ENCODE measurements at regions of chr1 and their contacts with region 1.

Region 1: GRCh38 chr1:150235852-150236613 is at the start of gene ANP32E:
- DNase-seq: peak; percentile 82
- ATAC-seq: peak; percentile 88
- H3K4me3 Mint-ChIP-seq: no peak within 1 kb of the TSS
- H3K27ac Mint-ChIP-seq: no peak within 1 kb of the TSS
- H3K4me1 Mint-ChIP-seq: peaks cover 22% of the 10 kb centered on the region
- H3K27me3 Mint-ChIP-seq: peaks cover 2% of the 10 kb centered on the region
- CTCF ChIP-seq: no peak
- total RNA-seq, gene ANP32E: 70.5 and 84.3 TPM in 2 replicates

Region 2: DNA sequence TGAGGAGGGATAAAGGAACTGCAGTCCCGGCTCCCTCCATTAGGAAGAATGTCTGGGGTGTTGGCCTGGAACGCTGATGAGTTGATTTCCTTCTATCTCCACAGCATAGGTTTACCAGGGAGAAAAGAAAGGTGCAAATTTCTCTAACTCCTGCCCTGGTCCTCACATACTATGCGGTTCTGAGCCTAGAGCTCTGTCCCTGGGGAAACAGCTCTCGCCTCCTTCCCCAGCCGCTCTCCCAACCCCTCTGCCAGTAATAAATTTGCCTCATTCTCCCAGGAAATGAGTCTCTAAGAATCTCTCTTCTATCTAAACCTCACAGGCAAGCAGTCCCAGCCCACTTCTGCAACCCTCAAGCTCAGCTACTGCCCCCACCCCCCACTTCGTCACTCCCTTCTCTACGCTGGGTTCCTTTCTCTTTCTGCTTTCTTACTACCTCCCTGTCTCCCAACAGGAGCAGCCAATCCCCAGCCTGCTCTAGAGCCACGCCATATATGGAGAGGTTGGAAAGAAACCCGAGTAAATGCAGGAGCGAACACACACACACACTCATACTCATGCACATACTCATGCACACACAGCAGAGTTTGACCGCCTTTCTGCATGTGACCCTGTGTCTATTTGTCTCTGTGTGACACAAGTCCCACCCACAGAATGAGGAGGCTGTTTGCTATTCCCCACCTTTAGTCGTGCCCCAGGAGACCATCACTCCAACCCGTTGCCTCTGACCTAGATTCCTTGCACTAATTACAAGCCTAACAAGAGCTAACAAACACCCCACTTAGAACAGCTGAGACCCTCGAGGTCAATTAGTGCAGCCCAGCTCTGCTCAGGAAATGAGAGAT is 72.9 kb before region 1 on chr1:
- CTCF ChIA-PET with region 1: no interaction called
- POLR2A ChIA-PET with region 1: interaction called, 9 read pairs
- intact Hi-C with region 1: loop called (anchors 2 kb)
- DNase-seq: peak; percentile 34
- ATAC-seq: peak; percentile 28
- H3K4me3 Mint-ChIP-seq: peak overlapping the region; percentile 81
- H3K27ac Mint-ChIP-seq: peak overlapping the region; percentile 98
- H3K4me1 Mint-ChIP-seq: peaks cover 86% of the 10 kb centered on the region
- H3K27me3 Mint-ChIP-seq: no peaks in the 10 kb centered on the region
- CTCF ChIP-seq: no peak

Region 3: GRCh38 chr1:150225546-150225945 is 10.5 kb before region 1 on chr1:
- CTCF ChIA-PET with region 1: interaction called, 3 read pairs
- POLR2A ChIA-PET with region 1: interaction called, 15 read pairs
- intact Hi-C with region 1: no loop called
- DNase-seq: no peak
- ATAC-seq: peak; percentile 57
- H3K4me3 Mint-ChIP-seq: peak overlapping the region; percentile 11
- H3K27ac Mint-ChIP-seq: peak overlapping the region; percentile 79
- H3K4me1 Mint-ChIP-seq: peaks cover 22% of the 10 kb centered on the region
- H3K27me3 Mint-ChIP-seq: no peaks in the 10 kb centered on the region
- CTCF ChIP-seq: no peak

Region 4: DNA sequence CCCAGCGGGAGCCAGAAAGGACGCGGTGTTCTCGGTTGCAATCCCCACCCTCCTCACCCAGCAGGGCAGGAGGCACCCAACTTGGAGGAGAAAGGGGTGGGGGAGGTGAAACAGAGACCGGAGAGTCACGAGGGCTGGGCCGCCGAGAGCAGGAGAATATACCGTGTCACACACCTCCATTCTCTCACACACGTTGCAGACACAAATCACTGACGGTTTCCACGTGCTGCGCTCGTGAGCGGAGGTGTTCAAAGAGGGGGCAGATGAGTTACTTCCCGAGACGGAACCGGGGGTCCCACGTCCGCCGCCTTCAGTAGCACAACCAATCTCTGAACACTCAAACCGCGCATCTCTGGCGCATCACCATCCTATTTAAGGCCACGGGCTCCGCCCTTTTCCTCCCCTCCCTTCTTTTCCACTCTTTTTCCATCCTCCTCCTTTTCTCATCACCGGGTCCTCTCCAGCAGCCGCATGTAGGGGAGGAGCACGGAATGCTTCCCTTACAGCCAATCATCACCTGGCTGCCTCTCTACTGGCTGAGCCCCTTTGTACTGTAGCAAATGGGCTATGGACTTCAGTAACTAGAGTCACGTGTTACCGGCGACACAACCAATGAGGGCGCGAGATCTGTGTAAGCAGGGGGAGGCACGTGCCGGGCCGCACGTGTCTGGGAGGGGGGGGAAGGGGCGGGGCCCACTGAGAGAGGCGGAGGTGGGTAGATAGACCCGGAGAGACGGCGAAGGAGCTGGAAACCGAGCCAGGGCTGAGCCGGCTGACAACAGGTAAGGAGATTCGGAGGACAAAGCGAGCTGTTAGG is 46.0 kb after region 1 on chr1 and contains the start of gene CIART:
- CTCF ChIA-PET with region 1: interaction called, 3 read pairs
- POLR2A ChIA-PET with region 1: interaction called, 7 read pairs
- intact Hi-C with region 1: loop called (anchors 1 kb)
- DNase-seq: peak; percentile 39
- ATAC-seq: peak; percentile 84
- H3K4me3 Mint-ChIP-seq: peak within 1 kb of the TSS; percentile 85
- H3K27ac Mint-ChIP-seq: peak within 1 kb of the TSS; percentile 67
- H3K4me1 Mint-ChIP-seq: peaks cover 20% of the 10 kb centered on the region
- H3K27me3 Mint-ChIP-seq: peaks cover 3% of the 10 kb centered on the region
- CTCF ChIP-seq: no peak
- total RNA-seq, gene CIART: 0.20 and 1.0 TPM in 2 replicates

Region 5: GRCh38 chr1:150293433-150294168 is 57.6 kb after region 1 on chr1 and contains the start of gene MRPS21:
- CTCF ChIA-PET with region 1: no interaction called
- POLR2A ChIA-PET with region 1: no interaction called
- intact Hi-C with region 1: no loop called
- DNase-seq: peak; percentile 77
- ATAC-seq: peak; percentile 97
- H3K4me3 Mint-ChIP-seq: peak within 1 kb of the TSS; percentile 94
- H3K27ac Mint-ChIP-seq: peak within 1 kb of the TSS; percentile 99
- H3K4me1 Mint-ChIP-seq: peaks cover 30% of the 10 kb centered on the region
- H3K27me3 Mint-ChIP-seq: no peaks in the 10 kb centered on the region
- CTCF ChIP-seq: no peak
- total RNA-seq, gene MRPS21: 66.8 and 69.2 TPM in 2 replicates

Region 6: DNA sequence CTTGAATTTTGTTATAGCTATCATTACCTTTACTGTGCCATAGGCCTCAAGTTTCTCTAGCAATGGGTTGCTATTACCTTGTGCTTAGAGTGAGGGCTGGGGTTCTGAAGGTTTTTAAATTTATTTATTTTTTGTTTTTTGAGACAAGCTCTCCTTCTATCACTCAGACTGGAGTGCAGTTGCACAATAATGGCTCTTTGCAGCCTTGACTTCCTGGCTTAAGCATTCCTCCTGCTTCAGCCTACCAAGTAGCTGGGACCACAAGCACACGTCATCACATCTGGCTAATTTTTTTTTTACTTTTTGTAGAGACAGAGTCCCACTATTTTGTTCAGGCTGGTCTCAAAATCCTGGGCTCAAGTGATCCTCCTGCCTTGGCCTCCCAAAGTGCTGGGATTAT is 1417.4 kb after region 1 on chr1:
- CTCF ChIA-PET with region 1: no interaction called
- POLR2A ChIA-PET with region 1: no interaction called
- intact Hi-C with region 1: no loop called
- DNase-seq: no peak
- ATAC-seq: no peak
- H3K4me3 Mint-ChIP-seq: no peak overlapping the region
- H3K27ac Mint-ChIP-seq: no peak overlapping the region
- H3K4me1 Mint-ChIP-seq: peaks cover 13% of the 10 kb centered on the region
- H3K27me3 Mint-ChIP-seq: no peaks in the 10 kb centered on the region
- CTCF ChIP-seq: no peak

Region 7: GRCh38 chr1:152237093-152237492 is 2001.1 kb after region 1 on chr1:
- CTCF ChIA-PET with region 1: no interaction called
- POLR2A ChIA-PET with region 1: no interaction called
- intact Hi-C with region 1: no loop called
- DNase-seq: no peak
- ATAC-seq: no peak
- H3K4me3 Mint-ChIP-seq: no peak overlapping the region
- H3K27ac Mint-ChIP-seq: no peak overlapping the region
- H3K4me1 Mint-ChIP-seq: no peaks in the 10 kb centered on the region
- H3K27me3 Mint-ChIP-seq: peaks cover 26% of the 10 kb centered on the region
- CTCF ChIP-seq: no peak